ENCODE measurements at regions of chr21 and their contacts with region 1.

Region 1: GRCh38 chr21:33685613-33686197 is 43.4 kb downstream of the ITSN1 start:
- H3K4me3 ChIP-seq: no peak overlapping the region
- H3K27ac ChIP-seq: no peak overlapping the region
- H3K4me1 ChIP-seq: peaks cover 42% of the 10 kb centered on the region
- CTCF ChIP-seq: no peak

Region 2: GRCh38 chr21:33699277-33699676 is 13.6 kb after region 1 on chr21:
- CTCF ChIA-PET with region 1: interaction called, 8 read pairs
- POLR2A ChIA-PET with region 1: interaction called, 10 read pairs
- H3K4me3 ChIP-seq: no peak overlapping the region
- H3K27ac ChIP-seq: no peak overlapping the region
- H3K4me1 ChIP-seq: peaks cover 5% of the 10 kb centered on the region; the same call in 1 of the 2 replicates
- CTCF ChIP-seq: no peak

Region 3: DNA sequence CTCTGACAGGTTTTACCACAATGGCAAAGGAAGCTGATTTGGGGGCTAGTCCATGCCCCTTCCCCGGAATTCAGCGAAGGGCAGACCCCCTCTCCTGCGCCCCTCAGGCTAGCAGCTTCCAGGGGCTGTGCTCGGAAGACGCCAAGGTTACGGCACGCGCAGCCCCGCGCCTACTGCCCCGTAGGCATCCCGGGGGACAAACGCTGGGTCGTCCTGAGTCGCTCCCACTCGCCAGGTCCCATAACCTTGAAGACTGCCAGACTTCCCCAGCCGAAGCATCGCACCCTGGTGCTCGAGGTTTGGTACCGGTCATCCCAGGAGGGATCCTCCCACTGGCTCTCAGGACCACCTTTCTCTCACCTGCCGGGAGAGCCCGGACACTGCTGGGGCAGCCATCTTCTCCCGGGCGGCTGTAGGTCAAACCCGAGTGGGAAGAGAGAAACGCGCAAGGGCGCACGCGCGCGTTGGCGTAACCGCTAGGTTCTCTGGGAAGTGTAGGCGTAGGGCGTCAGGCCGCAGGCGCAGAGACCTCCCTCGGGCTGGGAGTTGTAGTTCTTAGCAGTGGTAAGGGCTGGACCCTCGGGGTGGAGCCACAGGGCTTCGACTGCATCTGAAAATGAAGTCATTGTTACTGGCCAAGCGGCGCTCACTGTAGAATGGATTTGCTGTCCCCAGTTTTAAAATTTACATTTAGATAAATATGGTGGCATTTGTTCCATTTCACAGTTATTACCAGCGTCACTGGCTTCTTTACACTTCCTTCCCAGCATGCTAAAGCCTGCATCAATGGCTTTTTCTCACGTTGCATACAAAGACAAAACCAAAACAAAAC is 229.9 kb after region 1 on chr21 and contains the start of gene ATP5PO:
- CTCF ChIA-PET with region 1: no interaction called
- POLR2A ChIA-PET with region 1: no interaction called
- H3K4me3 ChIP-seq: peak within 1 kb of the TSS; percentile 95
- H3K27ac ChIP-seq: peak within 1 kb of the TSS; percentile 67; the same call in 1 of the 2 replicates
- H3K4me1 ChIP-seq: no peaks in the 10 kb centered on the region
- CTCF ChIP-seq: 0 out of 2 replicates have a peak, but pooled peaks have one; percentile 17

Measured in HEK293 (cell line).